HCT116 (cell line): ENCODE measurements at regions of chr1 and their contacts with region 1.

Region 1: DNA sequence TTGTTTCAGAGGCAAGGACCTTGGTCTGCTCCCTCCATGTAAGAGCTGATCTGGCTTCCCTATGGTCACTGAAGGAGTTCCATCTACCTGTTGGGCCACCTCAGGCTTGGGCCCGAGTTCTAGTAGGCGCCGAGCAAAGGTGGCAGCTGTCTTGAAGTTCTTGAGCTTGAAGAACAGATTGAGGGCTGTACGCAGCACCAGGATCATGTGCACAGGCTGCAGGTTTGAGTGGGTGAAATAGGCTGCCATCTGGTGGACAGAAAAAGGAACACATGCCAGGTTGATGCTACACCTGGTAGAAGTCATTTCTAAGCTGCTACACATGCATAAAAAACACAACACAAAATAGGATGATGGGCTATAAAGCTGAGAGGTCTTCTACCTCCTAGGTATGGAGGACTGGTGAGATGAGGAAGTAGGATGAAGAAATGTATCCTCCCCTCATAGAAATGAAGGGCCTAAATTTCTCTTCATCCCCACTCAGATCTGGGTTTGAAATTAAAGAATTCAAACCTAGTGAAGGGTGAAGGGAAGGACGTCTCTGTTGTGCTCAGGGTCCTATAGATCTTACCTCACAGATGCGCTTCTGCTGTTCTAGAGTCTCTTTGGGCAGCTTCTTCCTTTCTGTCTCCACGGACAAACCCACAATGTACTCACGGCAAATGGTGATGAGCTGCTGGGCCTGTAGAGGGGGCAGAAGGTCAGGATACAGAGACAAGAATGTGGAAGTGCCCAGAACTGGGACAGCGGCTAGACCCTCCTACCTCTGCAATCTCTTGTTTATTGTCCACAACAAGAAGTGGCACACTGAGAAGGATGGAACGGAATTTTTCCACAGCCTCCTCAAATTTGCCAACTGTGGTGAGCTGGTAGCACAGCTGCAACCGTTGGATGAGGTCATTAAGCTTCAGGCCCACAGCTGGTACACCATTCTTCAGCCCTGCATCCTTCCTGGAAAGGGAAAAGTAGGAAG is 6.6 kb upstream of the PEX19 start:
- DNase-seq: peak; percentile 37
- ATAC-seq: peak; percentile 95
- H3K4me3 ChIP-seq: no peak overlapping the region
- H3K27ac ChIP-seq: no peak overlapping the region
- H3K4me1 ChIP-seq: no peaks in the 10 kb centered on the region
- H3K27me3 ChIP-seq: no peaks in the 10 kb centered on the region
- CTCF ChIP-seq: peak; percentile 65 to 84 (median 84)
- POLR2A ChIP-seq: no peak
- RAD21 ChIP-seq: peak; percentile 62

Region 2: GRCh38 chr1:160085686-160086455 is 205.7 kb before region 1 on chr1:
- CTCF ChIA-PET with region 1: interaction called, 10 read pairs
- POLR2A ChIA-PET with region 1: no interaction called
- RAD21 ChIA-PET with region 1: no interaction called
- intact Hi-C with region 1: no loop called
- DNase-seq: peak; percentile 44
- ATAC-seq: peak; percentile 79
- H3K4me3 ChIP-seq: no peak overlapping the region
- H3K27ac ChIP-seq: no peak overlapping the region
- H3K4me1 ChIP-seq: no peaks in the 10 kb centered on the region; a peak in 1 of 4 replicates
- H3K27me3 ChIP-seq: peaks cover 9% of the 10 kb centered on the region
- CTCF ChIP-seq: peak; percentile 74 to 92 (median 78)
- POLR2A ChIP-seq: no peak
- RAD21 ChIP-seq: peak; percentile 76

Region 3: DNA sequence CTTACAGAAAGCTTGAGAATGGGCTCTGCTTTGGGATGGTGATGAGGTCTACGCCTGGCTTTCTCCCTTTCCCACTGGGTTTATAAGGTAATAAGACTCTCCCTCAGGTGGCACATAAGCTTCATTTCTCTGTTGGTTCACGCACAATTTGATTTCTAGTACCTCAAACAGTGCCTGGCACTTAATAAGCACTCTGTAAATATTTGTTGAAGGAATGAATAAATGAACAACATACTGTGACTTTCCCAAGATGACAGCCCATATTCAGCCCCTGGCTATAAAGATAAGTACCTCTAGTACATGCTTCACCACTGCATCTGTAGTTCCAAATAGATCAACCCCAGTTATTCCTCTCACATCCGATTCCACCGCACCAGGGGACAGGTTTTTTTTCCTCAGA is 33.7 kb after region 1 on chr1:
- CTCF ChIA-PET with region 1: interaction called, 12 read pairs
- POLR2A ChIA-PET with region 1: no interaction called
- RAD21 ChIA-PET with region 1: interaction called in 1 of 2 experiments, 3 read pairs
- intact Hi-C with region 1: no loop called
- DNase-seq: no peak
- ATAC-seq: no peak
- H3K4me3 ChIP-seq: no peak overlapping the region
- H3K27ac ChIP-seq: no peak overlapping the region
- H3K4me1 ChIP-seq: no peaks in the 10 kb centered on the region
- H3K27me3 ChIP-seq: no peaks in the 10 kb centered on the region
- CTCF ChIP-seq: no peak
- POLR2A ChIP-seq: no peak
- RAD21 ChIP-seq: no peak

Region 4: DNA sequence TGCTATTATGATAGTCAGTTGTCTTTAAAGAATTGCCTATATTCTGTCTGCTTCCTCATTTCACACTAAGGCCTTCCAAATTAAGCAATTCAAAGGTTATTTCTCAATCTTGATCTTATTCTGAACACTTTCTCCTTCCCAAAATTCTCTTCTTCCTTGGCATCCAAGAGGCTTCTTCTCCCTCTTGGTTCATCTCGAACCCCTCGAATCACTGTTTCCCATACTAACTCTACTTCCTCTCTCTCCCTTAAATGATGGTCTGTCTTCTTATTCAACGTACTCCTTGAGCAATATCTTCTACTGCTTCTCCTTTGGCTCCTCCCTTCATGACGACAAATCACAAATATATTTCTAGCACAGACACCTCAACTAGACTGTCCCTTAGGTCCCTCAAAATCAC is 47.0 kb after region 1 on chr1:
- CTCF ChIA-PET with region 1: interaction called, 3 read pairs
- POLR2A ChIA-PET with region 1: no interaction called
- RAD21 ChIA-PET with region 1: no interaction called
- intact Hi-C with region 1: loop called (anchors 5 kb)
- DNase-seq: no peak
- ATAC-seq: no peak
- H3K4me3 ChIP-seq: no peak overlapping the region
- H3K27ac ChIP-seq: no peak overlapping the region
- H3K4me1 ChIP-seq: peaks cover 0 to 7% of the 10 kb centered on the region in 2 experiments; a peak in 3 of 4 replicates
- H3K27me3 ChIP-seq: no peaks in the 10 kb centered on the region
- CTCF ChIP-seq: no peak
- POLR2A ChIP-seq: no peak
- RAD21 ChIP-seq: no peak

Region 5: DNA sequence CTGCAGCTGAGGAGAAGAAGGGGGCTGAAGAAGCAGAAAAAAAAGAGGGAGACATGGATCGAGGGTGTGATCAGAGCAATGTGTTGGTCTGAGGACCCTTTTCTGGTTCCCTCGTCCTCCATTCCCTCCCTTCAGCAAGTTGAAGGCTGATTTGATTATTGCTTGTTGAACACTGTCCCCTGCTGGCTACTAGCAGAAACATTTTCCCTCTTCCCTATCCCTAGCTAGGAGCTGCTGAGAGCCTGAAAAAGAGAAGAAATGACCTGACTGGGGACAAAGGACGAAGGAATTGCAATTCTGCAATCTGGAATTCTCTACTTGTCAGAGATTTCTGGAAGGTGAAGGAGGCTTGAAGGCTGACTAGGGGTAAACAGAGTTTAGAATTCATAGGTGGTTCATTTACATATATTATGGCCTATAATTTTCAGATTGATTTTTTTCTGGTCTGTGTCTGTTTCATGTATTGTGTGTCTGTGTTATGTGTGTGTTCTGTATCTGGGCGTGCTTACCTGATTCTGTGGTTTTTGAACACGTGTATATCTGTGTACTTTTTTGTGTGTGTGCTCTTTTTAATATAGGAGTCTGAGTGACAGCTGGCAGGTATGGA is 85.1 kb after region 1 on chr1:
- CTCF ChIA-PET with region 1: interaction called, 17 read pairs
- POLR2A ChIA-PET with region 1: no interaction called
- RAD21 ChIA-PET with region 1: interaction called, 3 to 4 read pairs
- intact Hi-C with region 1: no loop called
- DNase-seq: peak; percentile 61
- ATAC-seq: peak; percentile 92
- H3K4me3 ChIP-seq: no peak overlapping the region
- H3K27ac ChIP-seq: no peak overlapping the region
- H3K4me1 ChIP-seq: peaks cover 0 to 8% of the 10 kb centered on the region in 2 experiments; a peak in 1 of 4 replicates
- H3K27me3 ChIP-seq: no peaks in the 10 kb centered on the region
- CTCF ChIP-seq: peak; percentile 89 to 96 (median 92)
- POLR2A ChIP-seq: no peak
- RAD21 ChIP-seq: peak; percentile 96

Region 6: GRCh38 chr1:160416369-160416768 is 124.8 kb after region 1 on chr1:
- CTCF ChIA-PET with region 1: interaction called, 12 read pairs
- POLR2A ChIA-PET with region 1: no interaction called
- RAD21 ChIA-PET with region 1: no interaction called
- intact Hi-C with region 1: no loop called
- DNase-seq: peak; percentile 36
- ATAC-seq: peak; percentile 98
- H3K4me3 ChIP-seq: no peak overlapping the region
- H3K27ac ChIP-seq: no peak overlapping the region
- H3K4me1 ChIP-seq: no peaks in the 10 kb centered on the region
- H3K27me3 ChIP-seq: no peaks in the 10 kb centered on the region
- CTCF ChIP-seq: peak; percentile 64 to 85 (median 75)
- POLR2A ChIP-seq: no peak
- RAD21 ChIP-seq: peak; percentile 94

Region 7: DNA sequence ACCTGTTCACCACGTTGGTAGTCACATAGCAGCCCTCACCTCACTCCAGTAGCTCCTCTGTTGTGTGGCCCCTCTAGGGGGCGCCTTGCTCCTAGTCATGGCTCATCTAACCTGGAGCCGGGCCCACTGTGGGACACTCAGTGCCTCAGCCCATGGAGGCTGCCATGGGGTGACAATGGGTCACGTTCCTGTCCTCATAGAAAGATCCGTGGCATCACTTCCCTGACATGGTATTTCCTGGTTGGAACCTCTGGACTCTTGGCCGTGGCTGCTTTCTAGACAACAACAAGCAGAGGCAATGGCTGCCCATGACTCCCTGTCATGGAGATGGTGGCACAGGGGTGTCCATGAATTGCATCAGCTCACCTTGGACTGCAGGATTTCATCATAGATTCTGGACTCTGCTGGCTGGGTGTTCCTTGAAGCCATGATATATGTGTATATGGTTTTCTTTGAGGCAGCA is 259.1 kb after region 1 on chr1:
- CTCF ChIA-PET with region 1: no interaction called
- POLR2A ChIA-PET with region 1: no interaction called
- RAD21 ChIA-PET with region 1: no interaction called
- intact Hi-C with region 1: no loop called
- DNase-seq: no peak
- ATAC-seq: peak; percentile 76
- H3K4me3 ChIP-seq: no peak overlapping the region
- H3K27ac ChIP-seq: no peak overlapping the region
- H3K4me1 ChIP-seq: no peaks in the 10 kb centered on the region
- H3K27me3 ChIP-seq: no peaks in the 10 kb centered on the region
- CTCF ChIP-seq: peak; percentile 5 to 46 (median 43); a peak in 4 of 6 replicates
- POLR2A ChIP-seq: no peak
- RAD21 ChIP-seq: peak; percentile 21; the same call in 1 of the 2 replicates